Head of caudate nucleus (tissue), 42 donors: ENCODE measurements at regions of chr9 and their contacts with region 1.

Region 1: GRCh38 chr9:121322037-121322775 is 47.8 kb downstream of the STOM start:
- DNase-seq: no peak

Region 2: GRCh38 chr9:121369595-121370265 is 47.5 kb after region 1 on chr9 and contains the start of gene STOM:
- intact Hi-C with region 1: loop called (anchors 5 kb)
- DNase-seq: peak in 14 of 42 donors; percentile 40 to 77 (median 60)

Region 3: DNA sequence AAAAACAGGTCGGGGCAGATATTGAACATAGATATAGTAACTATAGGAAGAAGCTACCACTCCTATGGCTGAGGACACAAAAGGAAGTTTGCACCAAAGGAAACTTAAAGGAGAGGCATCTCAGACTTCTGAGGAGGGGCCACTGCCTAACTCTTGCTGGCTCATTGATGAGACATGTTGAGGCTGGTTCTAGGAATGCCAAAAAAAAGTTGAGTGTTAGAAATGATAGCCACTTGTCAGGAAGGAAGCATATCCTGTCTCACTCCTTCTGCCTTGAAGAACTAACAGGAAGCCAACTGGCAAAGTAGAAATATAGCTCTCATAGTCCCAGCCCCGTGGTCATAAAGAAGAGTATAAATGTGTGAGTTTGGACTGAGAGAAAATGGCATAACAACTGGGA is 71.1 kb after region 1 on chr9:
- intact Hi-C with region 1: loop called (anchors 5 kb)
- DNase-seq: no peak

Region 4: DNA sequence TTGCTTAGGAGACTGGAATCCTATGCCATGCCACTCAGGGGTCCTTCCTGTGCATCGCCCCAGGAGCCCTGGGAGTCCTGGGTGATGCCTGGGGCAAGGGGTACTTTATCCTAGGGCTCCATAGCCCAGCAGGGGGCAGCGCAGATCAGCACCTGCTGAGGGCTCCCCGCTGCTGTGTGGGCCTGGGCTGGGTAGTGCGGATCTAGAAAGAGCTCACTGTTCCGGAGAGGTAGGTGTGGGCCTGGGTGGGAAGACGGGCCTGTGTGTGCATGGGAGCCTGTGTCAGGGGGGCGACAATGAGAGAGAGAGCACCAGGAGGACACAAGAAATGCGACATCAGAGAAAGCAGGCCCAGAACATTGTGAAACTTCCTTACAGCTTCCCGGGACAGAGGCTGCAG is 317.9 kb after region 1 on chr9:
- intact Hi-C with region 1: no loop called
- DNase-seq: peak; percentile 47 to 91 (median 76)